Heart left ventricle (tissue), 16 donors: ENCODE measurements at regions of chr14 and their contacts with region 1.

Region 1: GRCh38 chr14:101707068-101707842 is 54.3 kb upstream of the PPP2R5C start:
- DNase-seq: peak in 4 of 5 donors; percentile 40 to 59 (median 55)
- ATAC-seq: peak; percentile 29 to 73 (median 54)
- H3K4me3 ChIP-seq: peak overlapping the region in 1 of 12 donors; percentile 8
- H3K27ac ChIP-seq: peak overlapping the region in 10 of 12 donors; percentile 51 to 89 (median 82)
- H3K4me1 ChIP-seq: peaks cover 0 to 28% (median 20%) of the 10 kb centered on the region in 12 donors
- H3K27me3 ChIP-seq: peaks cover 0 to 11% (median 0%) of the 10 kb centered on the region in 9 donors
- CTCF ChIP-seq: peak; percentile 64 to 91 (median 88)
- POLR2A ChIP-seq: no peak

Region 2: DNA sequence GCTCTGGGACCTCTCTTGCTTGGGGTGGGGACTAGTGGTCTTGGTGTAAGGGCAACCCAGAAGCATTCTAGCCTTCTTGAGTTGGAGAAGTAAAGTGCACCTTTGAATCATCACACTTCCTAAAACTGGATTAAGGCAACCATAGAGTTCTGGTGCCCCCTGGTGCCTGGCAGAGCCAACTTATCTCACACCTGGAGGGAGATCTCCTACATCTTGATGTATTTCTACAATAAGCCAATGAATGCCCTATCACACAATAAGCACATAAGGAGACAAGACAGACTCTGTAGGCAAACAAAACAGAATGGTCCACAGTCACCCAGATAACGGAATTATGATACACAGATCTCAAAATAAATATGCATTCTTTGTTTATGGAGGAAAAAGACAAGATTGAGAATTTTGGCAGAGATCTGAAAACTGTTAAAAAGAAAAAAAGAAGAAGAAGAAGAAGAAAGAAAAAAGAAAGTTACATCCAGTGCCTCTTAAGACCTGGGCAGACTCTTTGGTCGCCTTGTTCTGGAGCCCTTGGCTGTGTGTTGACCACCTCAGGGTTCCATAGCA is 41.7 kb before region 1 on chr14:
- intact Hi-C with region 1: no loop called
- DNase-seq: no peak
- ATAC-seq: no peak
- H3K4me3 ChIP-seq: no peak overlapping the region
- H3K27ac ChIP-seq: no peak overlapping the region
- H3K4me1 ChIP-seq: no peaks in the 10 kb centered on the region
- H3K27me3 ChIP-seq: peaks cover 0 to 50% (median 13%) of the 10 kb centered on the region in 9 donors
- CTCF ChIP-seq: peak in 6 of 12 donors; percentile 6 to 28 (median 17)
- POLR2A ChIP-seq: no peak

Region 3: GRCh38 chr14:101797856-101798255 is 90.6 kb after region 1 on chr14:
- intact Hi-C with region 1: no loop called
- DNase-seq: peak in 3 of 5 donors; percentile 46 to 70 (median 68)
- ATAC-seq: peak; percentile 86 to 93 (median 91)
- H3K4me3 ChIP-seq: no peak overlapping the region
- H3K27ac ChIP-seq: peak overlapping the region in 10 of 12 donors; percentile 18 to 87 (median 64)
- H3K4me1 ChIP-seq: peaks cover 0 to 34% (median 4%) of the 10 kb centered on the region in 12 donors
- H3K27me3 ChIP-seq: no peaks in the 10 kb centered on the region
- CTCF ChIP-seq: no peak
- POLR2A ChIP-seq: no peak

Region 4: DNA sequence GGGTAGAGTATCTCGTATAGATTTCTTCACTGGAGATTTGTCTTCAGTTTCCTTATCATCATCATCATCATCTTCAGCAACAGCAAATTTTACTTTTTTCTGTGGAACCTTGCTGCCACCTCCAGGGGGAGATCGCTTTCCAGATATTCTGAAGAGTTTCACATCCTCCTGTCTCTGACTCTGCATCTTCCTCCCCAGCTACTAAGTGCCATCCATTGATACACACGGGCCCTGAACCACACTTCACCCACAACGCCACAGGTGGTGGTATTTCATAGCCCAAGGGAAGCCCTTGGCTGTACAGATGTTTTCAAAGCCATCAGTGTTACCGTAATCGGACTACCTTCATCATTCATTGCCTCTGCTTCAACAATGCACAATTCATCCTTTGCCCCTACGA is 136.4 kb after region 1 on chr14:
- intact Hi-C with region 1: loop called in 1 of 10 experiments (anchors 10 kb)
- DNase-seq: no peak
- ATAC-seq: peak in 2 of 4 donors; percentile 11 to 31
- H3K4me3 ChIP-seq: no peak overlapping the region
- H3K27ac ChIP-seq: peak overlapping the region in 9 of 12 donors; percentile 5 to 68 (median 39)
- H3K4me1 ChIP-seq: peaks cover 2 to 66% (median 45%) of the 10 kb centered on the region in 12 donors
- H3K27me3 ChIP-seq: no peaks in the 10 kb centered on the region
- CTCF ChIP-seq: peak in 9 of 12 donors; percentile 13 to 35 (median 24)
- POLR2A ChIP-seq: no peak

Region 5: GRCh38 chr14:101964297-101965144 is 257.3 kb after region 1 on chr14 and contains the start of gene DYNC1H1:
- intact Hi-C with region 1: loop called in 6 of 10 experiments (anchors 2 to 10 kb)
- DNase-seq: peak; percentile 93 to 97 (median 97)
- ATAC-seq: peak; percentile 85 to 93 (median 91)
- H3K4me3 ChIP-seq: peak within 1 kb of the TSS; percentile 76 to 100 (median 99)
- H3K27ac ChIP-seq: peak within 1 kb of the TSS; percentile 82 to 98 (median 96)
- H3K4me1 ChIP-seq: peaks cover 0 to 59% (median 40%) of the 10 kb centered on the region in 12 donors
- H3K27me3 ChIP-seq: no peaks in the 10 kb centered on the region
- CTCF ChIP-seq: no peak
- POLR2A ChIP-seq: peak; percentile 99 to 100
- total RNA-seq, gene DYNC1H1: 291 to 942 (median 603) TPM

Region 6: GRCh38 chr14:102034301-102034700 is 327.0 kb after region 1 on chr14:
- intact Hi-C with region 1: no loop called
- DNase-seq: no peak
- ATAC-seq: no peak
- H3K4me3 ChIP-seq: no peak overlapping the region
- H3K27ac ChIP-seq: no peak overlapping the region
- H3K4me1 ChIP-seq: no peaks in the 10 kb centered on the region
- H3K27me3 ChIP-seq: no peaks in the 10 kb centered on the region
- CTCF ChIP-seq: no peak
- POLR2A ChIP-seq: no peak

Region 7: DNA sequence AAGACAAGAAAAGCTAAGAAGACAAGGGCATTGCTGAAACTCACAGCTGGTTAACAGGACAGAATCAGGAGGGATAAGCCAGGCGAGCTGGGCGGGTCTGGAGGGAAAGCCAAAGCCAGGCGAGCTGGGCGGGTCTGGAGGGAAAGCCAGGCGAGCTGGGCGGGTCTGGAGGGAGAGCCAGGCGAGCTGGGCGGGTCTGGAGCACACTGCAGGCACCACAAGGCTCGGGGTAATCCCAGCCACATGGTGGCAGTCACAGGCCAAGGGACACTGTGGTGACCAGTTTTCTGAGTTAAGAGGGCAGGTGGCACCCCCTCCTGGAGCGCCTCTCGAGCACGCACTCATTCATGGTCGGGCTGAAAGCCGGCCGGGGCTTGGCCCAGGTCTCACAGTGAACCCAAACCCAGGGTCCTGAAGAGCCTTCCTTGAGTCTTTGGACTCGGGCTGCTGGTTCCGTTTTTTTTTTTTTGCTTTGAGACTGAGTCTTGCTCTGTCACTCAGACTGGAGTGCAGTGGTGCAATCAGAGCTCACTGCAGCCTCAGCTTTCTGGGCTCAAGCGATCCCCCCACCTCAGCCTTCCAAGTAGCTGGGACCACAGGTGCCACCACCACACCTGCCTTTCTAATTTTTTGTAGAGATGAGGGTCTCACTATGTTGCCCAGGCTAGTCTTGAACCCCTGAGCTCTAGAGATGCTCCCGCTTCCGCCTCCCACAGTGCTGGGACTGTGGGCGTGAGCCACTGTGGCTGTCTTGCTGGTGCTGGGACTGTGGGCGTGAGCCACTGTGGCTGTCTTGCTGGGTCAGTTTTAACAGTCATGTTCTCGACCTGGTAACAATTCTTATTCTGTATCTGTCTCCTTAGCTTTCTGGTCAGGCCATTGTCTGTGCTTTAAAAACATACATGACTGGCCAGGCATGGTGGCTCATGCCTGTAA is 339.4 kb after region 1 on chr14:
- intact Hi-C with region 1: loop called in 1 of 10 experiments (anchors 5 kb)
- DNase-seq: peak; percentile 82 to 91 (median 86)
- ATAC-seq: peak; percentile 90 to 93 (median 91)
- H3K4me3 ChIP-seq: no peak overlapping the region
- H3K27ac ChIP-seq: peak overlapping the region in 4 of 12 donors; percentile 18 to 83 (median 52)
- H3K4me1 ChIP-seq: peaks cover 0 to 40% (median 11%) of the 10 kb centered on the region in 12 donors
- H3K27me3 ChIP-seq: no peaks in the 10 kb centered on the region
- CTCF ChIP-seq: peak in 11 of 12 donors; percentile 30 to 81 (median 57)
- POLR2A ChIP-seq: no peak